Gastrocnemius medialis (tissue), 4 donors: ENCODE measurements at regions of chr1 and their contacts with region 1.

Region 1: GRCh38 chr1:156480411-156481192 is 20.0 kb downstream of the MEF2D start:
- DNase-seq: peak in 1 of 2 donors; percentile 61
- ATAC-seq: no peak
- H3K4me3 ChIP-seq: no peak overlapping the region
- H3K27ac ChIP-seq: peak overlapping the region; percentile 96 to 99 (median 98)
- H3K4me1 ChIP-seq: peaks cover 95 to 100% of the 10 kb centered on the region in 2 donors
- H3K27me3 ChIP-seq: no peaks in the 10 kb centered on the region
- CTCF ChIP-seq: peak; percentile 56 to 79 (median 72)
- POLR2A ChIP-seq: no peak

Region 2: GRCh38 chr1:156114101-156114916 is 366.3 kb before region 1 on chr1 and contains the start of gene LMNA:
- in situ Hi-C with region 1: loop called in 1 of 4 experiments (anchors 25 kb)
- intact Hi-C with region 1: no loop called
- DNase-seq: peak; percentile 92 to 95
- ATAC-seq: peak; percentile 71 to 78
- H3K4me3 ChIP-seq: peak within 1 kb of the TSS; percentile 94 to 100 (median 96)
- H3K27ac ChIP-seq: peak within 1 kb of the TSS; percentile 98 to 99 (median 98)
- H3K4me1 ChIP-seq: peaks cover 57 to 59% of the 10 kb centered on the region in 2 donors
- H3K27me3 ChIP-seq: no peaks in the 10 kb centered on the region
- CTCF ChIP-seq: no peak
- POLR2A ChIP-seq: peak; percentile 98
- total RNA-seq, gene LMNA: 143 to 244 (median 220) TPM